ENCODE measurements at regions of chr19 and their contacts with region 1.

Region 1: GRCh38 chr19:46081928-46082727 is 41.3 kb upstream of the IGFL4 start:
- DNase-seq: no peak
- H3K4me3 ChIP-seq: no peak overlapping the region
- H3K27ac ChIP-seq: no peak overlapping the region
- H3K4me1 ChIP-seq: no peaks in the 10 kb centered on the region
- H3K27me3 ChIP-seq: peaks cover 3% of the 10 kb centered on the region
- CTCF ChIP-seq: peak; percentile 54 to 62 (median 62)

Region 2: DNA sequence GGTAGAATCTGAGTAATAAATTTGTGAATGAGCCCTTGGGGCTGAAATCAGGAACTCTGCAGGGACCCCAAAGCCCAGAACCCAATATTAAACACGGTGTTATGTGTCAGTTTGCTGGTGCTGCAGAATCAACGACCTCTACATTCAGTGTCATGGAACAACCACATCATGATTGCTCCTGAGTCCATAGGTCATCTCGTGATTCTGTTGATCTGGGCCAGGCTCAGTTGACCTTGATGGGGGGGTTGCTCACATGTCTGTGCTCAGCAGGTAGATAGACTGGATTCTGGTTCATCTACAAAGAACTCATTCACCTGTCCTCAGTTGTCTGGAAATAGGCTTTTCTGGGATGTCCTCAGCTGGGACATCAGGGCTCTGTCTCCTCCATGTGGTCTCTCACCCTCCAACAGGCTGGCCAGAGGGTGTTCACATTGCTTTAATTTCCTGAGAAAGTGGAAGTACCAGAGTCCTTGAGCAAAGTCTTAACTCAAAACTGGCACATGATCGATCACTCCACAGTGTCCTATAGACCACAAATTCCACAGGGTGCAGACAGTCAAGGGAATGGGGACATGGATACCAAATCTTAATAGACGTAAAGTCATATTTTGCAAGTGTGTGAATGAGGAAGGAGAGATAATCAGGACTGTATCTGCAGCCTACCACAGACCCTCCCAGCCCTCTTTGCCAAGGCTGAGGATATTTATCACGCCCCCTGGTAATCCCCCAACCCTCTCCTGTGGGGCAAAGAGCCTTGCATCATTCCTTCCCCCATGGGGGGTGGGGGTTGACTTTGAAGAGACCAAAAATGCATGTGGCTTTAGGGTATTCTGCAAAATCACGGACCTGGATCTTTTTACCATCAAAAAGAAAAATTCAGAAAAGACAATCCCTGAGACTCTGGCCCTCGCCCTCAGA is 108.1 kb after region 1 on chr19:
- intact Hi-C with region 1: loop called (anchors 2 kb)
- DNase-seq: no peak
- H3K4me3 ChIP-seq: no peak overlapping the region
- H3K27ac ChIP-seq: no peak overlapping the region
- H3K4me1 ChIP-seq: no peaks in the 10 kb centered on the region
- H3K27me3 ChIP-seq: no peaks in the 10 kb centered on the region
- CTCF ChIP-seq: no peak

Region 3: GRCh38 chr19:46265217-46265828 is 183.2 kb after region 1 on chr19:
- intact Hi-C with region 1: loop called (anchors 1 kb)
- DNase-seq: peak in 1 of 2 donors; percentile 76
- H3K4me3 ChIP-seq: no peak overlapping the region
- H3K27ac ChIP-seq: no peak overlapping the region
- H3K4me1 ChIP-seq: no peaks in the 10 kb centered on the region
- H3K27me3 ChIP-seq: no peaks in the 10 kb centered on the region
- CTCF ChIP-seq: peak; percentile 84 to 90 (median 88)

Measured in ascending aorta (tissue), 2 donors.